H1 (cell line): ENCODE measurements at regions of chr19 and their contacts with region 1.

Region 1: DNA sequence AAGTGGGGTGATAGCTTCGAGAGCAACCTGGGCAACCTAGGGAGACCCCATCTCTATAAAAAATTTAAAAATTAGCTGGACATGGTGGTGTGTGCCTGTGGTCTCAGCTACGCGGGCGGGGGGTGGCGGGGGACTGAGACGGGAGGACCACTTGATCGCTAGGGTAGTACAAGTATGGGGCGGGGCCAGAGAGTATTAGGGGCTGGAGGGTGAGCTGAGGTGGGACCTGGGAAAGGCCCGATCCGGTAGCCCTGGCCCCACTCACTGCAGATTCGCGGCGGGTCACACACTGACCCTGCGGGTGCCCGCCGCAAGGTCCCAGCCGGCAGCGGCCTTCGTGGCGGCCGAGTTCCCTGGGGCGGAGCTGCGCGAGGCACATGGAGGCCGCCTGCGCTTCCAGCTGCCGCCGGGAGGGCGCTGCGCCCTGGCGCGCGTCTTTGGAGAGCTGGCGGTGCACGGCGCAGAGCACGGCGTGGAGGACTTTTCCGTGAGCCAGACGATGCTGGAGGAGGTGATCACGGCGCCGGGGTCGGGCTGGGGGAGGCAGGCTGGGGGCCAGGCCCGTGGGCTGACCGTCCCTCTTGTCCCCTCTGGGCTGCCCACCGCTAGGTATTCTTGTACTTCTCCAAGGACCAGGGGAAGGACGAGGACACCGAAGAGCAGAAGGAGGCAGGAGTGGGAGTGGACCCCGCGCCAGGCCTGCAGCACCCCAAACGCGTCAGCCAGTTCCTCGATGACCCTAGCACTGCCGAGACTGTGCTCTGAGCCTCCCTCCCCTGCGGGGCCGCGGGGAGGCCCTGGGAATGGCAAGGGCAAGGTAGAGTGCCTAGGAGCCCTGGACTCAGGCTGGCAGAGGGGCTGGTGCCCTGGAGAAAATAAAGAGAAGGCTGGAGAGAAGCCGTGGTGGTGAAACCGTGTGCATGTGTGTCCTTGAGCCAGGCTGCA is 2.0 kb upstream of the ARHGAP45 start:
- DNase-seq: peak in 1 of 2 experiments; percentile 88
- H3K4me3 ChIP-seq: peak overlapping the region in 2 of 4 experiments; percentile 9 to 54; a peak in 3 of 8 replicates
- H3K27ac ChIP-seq: no peak overlapping the region
- H3K4me1 ChIP-seq: peaks cover 0 to 27% (median 19%) of the 10 kb centered on the region in 4 experiments; a peak in 6 of 7 replicates
- H3K27me3 ChIP-seq: peaks cover 0 to 26% (median 18%) of the 10 kb centered on the region in 4 experiments; a peak in 5 of 7 replicates
- CTCF ChIP-seq: peak; percentile 65 to 86 (median 84)
- EP300 ChIP-seq: no peak
- POLR2A ChIP-seq: no peak
- RAD21 ChIP-seq: peak; percentile 38 to 60; a peak in 3 of 4 replicates

Region 2: GRCh38 chr19:1020868-1021425 is 44.0 kb before region 1 on chr19 and contains the start of gene TMEM259:
- CTCF ChIA-PET with region 1: interaction called, 3 read pairs
- POLR2A ChIA-PET with region 1: interaction called, 97 read pairs
- DNase-seq: peak; percentile 89 to 97
- H3K4me3 ChIP-seq: peak within 1 kb of the TSS; percentile 84 to 97 (median 94)
- H3K27ac ChIP-seq: peak within 1 kb of the TSS; percentile 96
- H3K4me1 ChIP-seq: peaks cover 0 to 31% (median 20%) of the 10 kb centered on the region in 4 experiments; a peak in 5 of 7 replicates
- H3K27me3 ChIP-seq: no peaks in the 10 kb centered on the region
- CTCF ChIP-seq: peak in 1 of 3 experiments; percentile 3; a peak in 1 of 4 replicates
- EP300 ChIP-seq: peak in 1 of 2 experiments; percentile 62; a peak in 1 of 3 replicates
- POLR2A ChIP-seq: no peak
- RAD21 ChIP-seq: peak in 1 of 2 experiments; percentile 8; a peak in 1 of 4 replicates
- total RNA-seq, gene TMEM259: 140 and 142 TPM in 2 replicates